Common myeloid progenitor, CD34-positive (primary cell): ENCODE measurements at regions of chr20 and their contacts with region 1.

Region 1: DNA sequence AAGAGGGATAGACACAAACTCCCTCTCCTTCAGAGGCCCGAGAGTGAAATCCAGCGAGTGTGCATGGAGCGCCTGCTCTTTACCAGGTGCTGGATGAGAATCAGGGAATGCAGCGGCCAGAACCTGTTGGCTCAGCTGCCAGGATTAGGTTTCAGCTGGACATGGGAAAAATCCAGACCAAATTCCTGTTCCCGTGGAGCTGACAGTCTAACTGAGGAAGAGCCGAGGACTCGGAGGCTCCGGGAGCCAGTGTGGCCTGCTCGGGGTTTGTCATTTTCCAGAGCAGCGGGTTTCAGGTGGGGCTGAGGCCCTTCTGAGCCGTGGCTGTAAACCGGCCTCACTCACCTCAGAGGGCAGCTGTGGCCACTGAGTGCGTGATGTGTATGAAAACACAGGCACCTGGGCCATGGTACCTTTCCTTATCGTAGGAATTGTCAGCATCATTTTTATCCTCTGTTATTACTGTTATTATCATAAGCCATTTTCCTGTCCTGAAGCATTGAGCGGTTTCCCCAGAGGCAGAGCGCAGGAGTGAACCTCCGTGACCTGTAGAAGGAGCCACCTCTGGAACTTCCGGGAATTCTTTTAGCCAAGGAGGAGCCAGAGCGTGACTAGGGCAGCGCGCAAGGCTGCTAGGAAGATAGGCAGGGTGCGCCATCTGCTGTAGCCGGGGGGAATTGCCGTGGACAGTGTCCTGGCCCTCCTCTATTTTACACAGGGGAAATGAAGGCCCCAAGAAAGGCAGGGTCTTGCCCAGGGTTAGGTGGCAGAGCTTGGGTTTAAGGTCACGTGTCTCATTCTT is 27.3 kb downstream of the PKIG start:
- DNase-seq: peak; percentile 83 to 85 (median 83)
- H3K4me3 ChIP-seq: peak overlapping the region in 6 of 7 experiments; percentile 8 to 62 (median 30)
- H3K27ac ChIP-seq: peak overlapping the region; percentile 74 to 82
- H3K4me1 ChIP-seq: peaks cover 14 to 55% (median 33%) of the 10 kb centered on the region in 4 experiments
- H3K27me3 ChIP-seq: no peaks in the 10 kb centered on the region

Region 2: GRCh38 chr20:44501448-44501847 is 108.3 kb before region 1 on chr20:
- CTCF ChIA-PET with region 1: interaction called, 13 read pairs
- POLR2A ChIA-PET with region 1: no interaction called
- DNase-seq: no peak
- H3K4me3 ChIP-seq: no peak overlapping the region
- H3K27ac ChIP-seq: no peak overlapping the region
- H3K4me1 ChIP-seq: no peaks in the 10 kb centered on the region
- H3K27me3 ChIP-seq: no peaks in the 10 kb centered on the region

Region 3: DNA sequence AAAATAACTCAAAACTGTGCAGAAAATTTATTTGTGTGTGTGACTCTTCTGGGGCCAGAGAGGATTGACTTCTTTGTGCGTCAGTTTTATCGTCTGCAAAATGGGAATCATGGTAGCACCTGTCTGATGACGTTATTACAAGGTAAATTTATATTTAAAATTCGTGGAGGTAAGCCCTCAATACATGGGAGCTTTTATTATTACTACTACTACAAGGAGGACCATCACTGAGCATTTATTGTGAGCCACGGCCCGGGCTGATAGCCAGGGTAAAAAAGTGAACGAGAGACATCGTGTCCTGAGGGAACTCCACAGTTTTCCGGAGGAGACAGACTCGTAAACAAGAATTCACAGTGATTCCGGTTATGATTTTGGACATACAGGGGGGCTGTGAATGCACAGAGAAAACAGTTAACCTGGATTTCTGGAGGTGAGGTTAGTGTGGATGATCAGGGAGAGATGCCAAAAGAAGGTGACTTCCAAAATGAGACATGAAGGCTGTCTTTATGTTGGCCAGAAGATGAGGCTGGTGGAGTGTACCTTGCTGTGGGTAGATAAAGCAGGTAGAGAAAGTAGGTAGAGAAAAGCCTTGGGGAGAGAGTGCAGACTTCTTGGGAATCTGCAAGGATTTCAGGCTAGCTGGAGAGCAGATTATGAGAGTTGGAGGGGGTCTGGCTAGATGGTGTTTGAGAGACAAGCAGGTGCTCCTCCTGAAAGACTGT is 77.3 kb before region 1 on chr20:
- CTCF ChIA-PET with region 1: interaction called, 20 read pairs
- POLR2A ChIA-PET with region 1: interaction called, 5 read pairs
- DNase-seq: peak in 2 of 3 donors; percentile 31 to 43
- H3K4me3 ChIP-seq: peak overlapping the region; percentile 20 to 89 (median 76)
- H3K27ac ChIP-seq: peak overlapping the region; percentile 64 to 81
- H3K4me1 ChIP-seq: peaks cover 0 to 38% (median 23%) of the 10 kb centered on the region in 4 experiments
- H3K27me3 ChIP-seq: no peaks in the 10 kb centered on the region

Region 4: DNA sequence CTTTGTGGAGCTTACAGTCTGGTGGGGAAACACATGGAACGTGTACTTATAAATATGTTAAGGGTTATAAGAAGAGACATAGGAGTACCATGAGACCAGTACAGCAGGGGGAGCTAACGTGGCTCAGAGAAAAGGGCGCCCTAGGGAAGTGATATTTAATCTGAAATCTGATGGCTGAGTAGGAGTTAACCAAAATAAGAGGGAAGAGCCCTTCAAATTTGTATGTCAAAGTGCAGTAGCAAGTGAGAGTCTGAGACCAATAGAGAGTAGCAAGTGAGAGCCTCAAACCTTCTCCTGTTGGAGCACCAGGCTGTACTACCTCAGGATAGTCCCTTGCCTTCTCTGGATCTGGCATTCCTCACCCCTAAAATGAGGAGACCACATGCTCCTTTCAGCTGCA is 33.4 kb before region 1 on chr20:
- CTCF ChIA-PET with region 1: interaction called, 43 read pairs
- POLR2A ChIA-PET with region 1: interaction called, 7 read pairs
- DNase-seq: peak; percentile 68 to 86 (median 82)
- H3K4me3 ChIP-seq: peak overlapping the region in 1 of 7 experiments; percentile 38
- H3K27ac ChIP-seq: no peak overlapping the region
- H3K4me1 ChIP-seq: peaks cover 9 to 56% (median 40%) of the 10 kb centered on the region in 4 experiments
- H3K27me3 ChIP-seq: no peaks in the 10 kb centered on the region

Region 5: DNA sequence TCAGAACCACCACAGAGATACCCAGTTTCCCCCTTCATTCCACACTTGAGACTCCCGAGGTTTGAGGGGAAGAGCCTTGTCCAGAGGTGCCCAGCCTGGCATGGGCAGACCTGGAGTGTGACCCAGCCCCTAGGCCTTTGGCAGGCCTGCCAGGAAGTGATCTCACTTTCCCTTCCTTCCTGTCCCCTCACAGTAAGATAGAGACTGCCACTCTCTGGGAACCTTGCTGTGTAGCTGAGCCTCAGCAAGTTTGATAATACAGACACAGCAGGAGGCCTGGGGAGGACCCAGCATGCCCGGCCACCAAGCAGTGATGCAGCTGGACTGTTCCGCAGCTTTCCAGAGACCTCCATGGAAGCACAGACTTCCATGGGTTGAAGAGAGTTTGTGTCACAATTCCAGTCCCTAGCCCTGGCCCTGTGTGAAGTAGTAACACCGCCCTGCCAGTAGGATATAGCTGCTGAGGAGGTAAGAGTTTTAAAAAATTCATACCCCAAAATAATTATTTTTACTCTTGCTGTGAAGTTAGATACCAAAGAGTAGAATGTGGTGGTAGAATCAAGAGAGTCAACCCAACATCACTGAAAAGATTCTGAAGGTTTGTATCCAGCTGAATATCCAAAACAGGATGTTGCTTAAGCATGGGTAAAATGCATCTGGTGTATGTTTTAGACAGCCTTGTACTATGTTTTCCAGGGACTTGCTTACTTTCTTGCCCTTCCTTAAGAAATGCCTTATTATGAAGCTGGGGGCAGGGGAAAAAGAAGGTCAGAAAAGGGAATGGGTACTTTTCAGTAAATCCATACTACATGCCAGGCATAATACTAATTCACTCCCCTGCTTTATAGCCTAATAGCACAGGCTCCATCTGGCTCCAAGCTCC is 11.0 kb before region 1 on chr20:
- CTCF ChIA-PET with region 1: interaction called, 32 read pairs
- POLR2A ChIA-PET with region 1: interaction called, 5 read pairs
- DNase-seq: peak in 2 of 3 donors; percentile 34 to 43
- H3K4me3 ChIP-seq: peak overlapping the region in 5 of 7 experiments; percentile 23 to 54 (median 35)
- H3K27ac ChIP-seq: peak overlapping the region; percentile 51 to 74
- H3K4me1 ChIP-seq: peaks cover 11 to 52% (median 34%) of the 10 kb centered on the region in 4 experiments
- H3K27me3 ChIP-seq: no peaks in the 10 kb centered on the region

Region 6: DNA sequence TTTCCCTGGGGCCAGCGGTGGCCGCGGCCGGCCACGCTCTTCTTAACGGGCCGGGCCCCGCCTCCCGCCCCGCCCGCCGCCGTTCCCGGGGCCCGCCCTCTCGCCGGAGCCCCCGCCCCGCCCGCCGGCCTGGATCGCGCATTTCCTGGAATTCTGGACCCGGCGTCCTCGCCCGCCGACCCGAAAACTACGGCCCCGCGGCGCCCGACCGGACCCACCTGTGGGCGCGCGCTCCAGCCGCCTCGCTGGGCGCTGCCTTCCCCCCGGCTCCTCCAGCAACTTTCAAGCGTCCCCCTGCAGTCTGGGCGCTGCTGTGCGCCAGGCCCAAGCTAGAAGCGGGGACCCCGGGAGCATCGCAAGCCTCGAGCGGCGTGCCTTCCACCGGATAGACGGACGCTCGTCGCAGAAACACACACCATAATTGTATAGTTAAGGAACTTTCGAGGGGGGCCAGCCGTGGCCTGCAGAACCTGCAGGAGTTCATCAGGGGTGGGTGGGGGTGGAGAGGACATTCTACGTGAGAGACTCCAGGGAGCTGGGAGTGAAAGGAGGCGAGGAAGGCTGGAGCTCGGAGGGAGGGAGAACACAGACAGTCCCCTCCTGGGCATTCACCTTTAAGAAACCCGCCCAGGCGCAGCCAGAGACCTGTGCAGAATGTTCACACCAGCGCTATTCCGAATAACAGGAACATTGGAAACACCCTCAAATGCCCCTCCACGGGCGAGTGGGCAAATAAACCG is 42.1 kb after region 1 on chr20 and contains the start of gene ADA:
- CTCF ChIA-PET with region 1: interaction called, 29 read pairs
- POLR2A ChIA-PET with region 1: interaction called, 13 read pairs
- DNase-seq: peak in 2 of 3 donors; percentile 63 to 76
- H3K4me3 ChIP-seq: peak within 1 kb of the TSS; percentile 82 to 99 (median 92)
- H3K27ac ChIP-seq: peak within 1 kb of the TSS; percentile 25 to 75
- H3K4me1 ChIP-seq: peaks cover 7 to 74% (median 56%) of the 10 kb centered on the region in 4 experiments
- H3K27me3 ChIP-seq: no peaks in the 10 kb centered on the region